ENCODE measurements at regions of chr6 and their contacts with region 1.

Region 1: DNA sequence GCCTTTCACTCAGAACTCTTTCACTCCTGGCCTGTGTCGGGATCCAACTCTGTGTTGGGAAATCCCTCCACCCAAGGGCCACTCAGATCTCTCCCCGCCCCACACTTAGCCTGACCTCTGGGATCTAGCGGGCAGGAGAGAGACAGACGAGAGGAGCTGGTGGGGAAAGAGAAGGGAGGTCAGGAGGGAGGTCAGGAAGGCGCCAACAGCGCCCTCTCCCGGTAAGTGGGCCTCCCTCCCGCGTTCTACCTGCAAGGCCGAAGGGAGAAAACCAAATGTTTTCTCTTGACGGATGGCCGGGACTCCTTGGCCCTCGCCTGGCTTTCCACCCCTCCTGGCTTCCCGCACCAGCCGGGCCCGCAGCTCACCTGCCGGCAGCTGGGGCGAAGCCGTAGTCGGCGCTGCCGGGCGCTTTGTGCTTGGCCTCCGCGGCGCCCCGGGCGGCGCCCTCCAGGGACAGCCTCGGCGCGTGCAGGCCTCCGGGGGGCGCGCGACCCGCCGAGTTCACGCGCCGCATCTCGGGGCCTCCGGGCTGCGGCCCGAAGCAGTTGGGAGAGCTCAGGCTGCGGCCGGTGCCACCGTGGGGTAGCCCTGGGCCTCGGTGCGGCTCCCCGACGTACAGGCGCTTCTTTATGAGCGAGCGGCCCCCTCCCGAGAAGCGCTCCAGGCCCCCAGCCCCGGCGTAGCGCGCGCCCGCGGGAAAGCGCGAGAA is 38.2 kb downstream of the C6orf132 start:
- DNase-seq: peak; percentile 65 to 77 (median 73)
- H3K4me3 ChIP-seq: peak overlapping the region in 1 of 2 donors; percentile 53
- H3K4me3 Mint-ChIP-seq: peak overlapping the region; percentile 42 to 84 (median 70)
- H3K27ac ChIP-seq: no peak overlapping the region
- H3K27ac Mint-ChIP-seq: peak overlapping the region in 1 of 7 donors; percentile 42
- H3K4me1 ChIP-seq: peaks cover 6% of the 10 kb centered on the region
- H3K4me1 Mint-ChIP-seq: peaks cover 0 to 14% (median 6%) of the 10 kb centered on the region in 4 donors
- H3K27me3 ChIP-seq: no peaks in the 10 kb centered on the region
- H3K27me3 Mint-ChIP-seq: peaks cover 2 to 6% of the 10 kb centered on the region in 2 donors

Region 2: GRCh38 chr6:41846666-41847237 is 257.5 kb before region 1 on chr6:
- CTCF ChIA-PET with region 1: interaction called, 14 read pairs
- POLR2A ChIA-PET with region 1: no interaction called
- intact Hi-C with region 1: loop called (anchors 1 kb)
- DNase-seq: peak; percentile 41 to 57 (median 51)
- H3K4me3 ChIP-seq: no peak overlapping the region
- H3K4me3 Mint-ChIP-seq: no peak overlapping the region
- H3K27ac ChIP-seq: no peak overlapping the region
- H3K27ac Mint-ChIP-seq: peak overlapping the region in 1 of 7 donors; percentile 53
- H3K4me1 ChIP-seq: no peaks in the 10 kb centered on the region
- H3K4me1 Mint-ChIP-seq: peaks cover 5 to 8% (median 6%) of the 10 kb centered on the region in 4 donors
- H3K27me3 ChIP-seq: no peaks in the 10 kb centered on the region
- H3K27me3 Mint-ChIP-seq: no peaks in the 10 kb centered on the region

Region 3: GRCh38 chr6:41901882-41902519 is 202.2 kb before region 1 on chr6:
- CTCF ChIA-PET with region 1: interaction called, 6 read pairs
- POLR2A ChIA-PET with region 1: no interaction called
- intact Hi-C with region 1: loop called (anchors 1 kb)
- DNase-seq: peak; percentile 54 to 61 (median 60)
- H3K4me3 ChIP-seq: no peak overlapping the region
- H3K4me3 Mint-ChIP-seq: no peak overlapping the region
- H3K27ac ChIP-seq: no peak overlapping the region
- H3K27ac Mint-ChIP-seq: peak overlapping the region in 3 of 7 donors; percentile 1 to 35 (median 4)
- H3K4me1 ChIP-seq: peaks cover 6% of the 10 kb centered on the region
- H3K4me1 Mint-ChIP-seq: peaks cover 7 to 13% (median 10%) of the 10 kb centered on the region in 4 donors
- H3K27me3 ChIP-seq: no peaks in the 10 kb centered on the region
- H3K27me3 Mint-ChIP-seq: no peaks in the 10 kb centered on the region

Region 4: GRCh38 chr6:42075159-42075838 is 29.0 kb before region 1 on chr6:
- CTCF ChIA-PET with region 1: interaction called, 13 read pairs
- POLR2A ChIA-PET with region 1: no interaction called
- intact Hi-C with region 1: no loop called
- DNase-seq: peak; percentile 19 to 40 (median 33)
- H3K4me3 ChIP-seq: no peak overlapping the region
- H3K4me3 Mint-ChIP-seq: no peak overlapping the region
- H3K27ac ChIP-seq: no peak overlapping the region
- H3K27ac Mint-ChIP-seq: peak overlapping the region in 2 of 7 donors; percentile 16 to 24
- H3K4me1 ChIP-seq: no peaks in the 10 kb centered on the region
- H3K4me1 Mint-ChIP-seq: peaks cover 0 to 4% (median 1%) of the 10 kb centered on the region in 4 donors
- H3K27me3 ChIP-seq: no peaks in the 10 kb centered on the region
- H3K27me3 Mint-ChIP-seq: no peaks in the 10 kb centered on the region

Region 5: GRCh38 chr6:42086046-42087035 is 17.9 kb before region 1 on chr6:
- CTCF ChIA-PET with region 1: interaction called, 23 read pairs
- POLR2A ChIA-PET with region 1: no interaction called
- intact Hi-C with region 1: no loop called
- DNase-seq: no peak
- H3K4me3 ChIP-seq: no peak overlapping the region
- H3K4me3 Mint-ChIP-seq: no peak overlapping the region
- H3K27ac ChIP-seq: no peak overlapping the region
- H3K27ac Mint-ChIP-seq: no peak overlapping the region
- H3K4me1 ChIP-seq: no peaks in the 10 kb centered on the region
- H3K4me1 Mint-ChIP-seq: no peaks in the 10 kb centered on the region
- H3K27me3 ChIP-seq: no peaks in the 10 kb centered on the region
- H3K27me3 Mint-ChIP-seq: no peaks in the 10 kb centered on the region

Region 6: GRCh38 chr6:42093582-42094329 is 10.5 kb before region 1 on chr6:
- CTCF ChIA-PET with region 1: interaction called, 23 read pairs
- POLR2A ChIA-PET with region 1: no interaction called
- intact Hi-C with region 1: no loop called
- DNase-seq: no peak
- H3K4me3 ChIP-seq: no peak overlapping the region
- H3K4me3 Mint-ChIP-seq: no peak overlapping the region
- H3K27ac ChIP-seq: no peak overlapping the region
- H3K27ac Mint-ChIP-seq: peak overlapping the region in 1 of 7 donors; percentile 52
- H3K4me1 ChIP-seq: no peaks in the 10 kb centered on the region
- H3K4me1 Mint-ChIP-seq: peaks cover 0 to 1% (median 0%) of the 10 kb centered on the region in 4 donors
- H3K27me3 ChIP-seq: no peaks in the 10 kb centered on the region
- H3K27me3 Mint-ChIP-seq: peaks cover 0 to under 1% of the 10 kb centered on the region in 2 donors

Region 7: DNA sequence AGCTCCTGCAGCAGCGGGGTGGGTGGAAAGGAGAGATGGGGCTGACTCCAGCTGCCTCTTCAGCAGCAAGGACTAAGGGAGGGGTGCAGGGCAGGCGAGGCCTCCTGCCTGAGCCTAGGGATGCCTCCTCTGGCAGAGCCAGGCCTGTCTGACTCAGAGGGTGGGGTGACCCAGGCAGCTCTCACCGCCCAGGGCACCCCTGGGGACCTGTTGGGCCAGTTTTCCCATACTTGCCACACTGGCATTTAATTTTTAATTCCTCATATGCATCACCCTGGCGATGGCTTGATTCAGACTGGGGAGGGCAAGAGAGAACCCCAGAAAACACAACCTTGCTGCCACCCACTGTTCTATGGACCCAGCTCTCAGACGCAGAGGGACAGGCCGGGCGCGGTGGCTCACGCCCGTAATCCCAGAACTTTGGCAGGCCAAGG is 18.5 kb after region 1 on chr6:
- CTCF ChIA-PET with region 1: interaction called, 19 read pairs
- POLR2A ChIA-PET with region 1: no interaction called
- intact Hi-C with region 1: no loop called
- DNase-seq: no peak
- H3K4me3 ChIP-seq: no peak overlapping the region
- H3K4me3 Mint-ChIP-seq: no peak overlapping the region
- H3K27ac ChIP-seq: no peak overlapping the region
- H3K27ac Mint-ChIP-seq: peak overlapping the region in 1 of 7 donors; percentile 2
- H3K4me1 ChIP-seq: no peaks in the 10 kb centered on the region
- H3K4me1 Mint-ChIP-seq: no peaks in the 10 kb centered on the region
- H3K27me3 ChIP-seq: no peaks in the 10 kb centered on the region
- H3K27me3 Mint-ChIP-seq: no peaks in the 10 kb centered on the region

Measured in CD4-positive, alpha-beta memory T cell (primary cell).